Caki2 (cell line): ENCODE measurements at regions of chr2 and their contacts with region 1.

Region 1: GRCh38 chr2:201118121-201118960 is 2.4 kb downstream of the CFLAR start:
- DNase-seq: peak; percentile 96

Region 2: DNA sequence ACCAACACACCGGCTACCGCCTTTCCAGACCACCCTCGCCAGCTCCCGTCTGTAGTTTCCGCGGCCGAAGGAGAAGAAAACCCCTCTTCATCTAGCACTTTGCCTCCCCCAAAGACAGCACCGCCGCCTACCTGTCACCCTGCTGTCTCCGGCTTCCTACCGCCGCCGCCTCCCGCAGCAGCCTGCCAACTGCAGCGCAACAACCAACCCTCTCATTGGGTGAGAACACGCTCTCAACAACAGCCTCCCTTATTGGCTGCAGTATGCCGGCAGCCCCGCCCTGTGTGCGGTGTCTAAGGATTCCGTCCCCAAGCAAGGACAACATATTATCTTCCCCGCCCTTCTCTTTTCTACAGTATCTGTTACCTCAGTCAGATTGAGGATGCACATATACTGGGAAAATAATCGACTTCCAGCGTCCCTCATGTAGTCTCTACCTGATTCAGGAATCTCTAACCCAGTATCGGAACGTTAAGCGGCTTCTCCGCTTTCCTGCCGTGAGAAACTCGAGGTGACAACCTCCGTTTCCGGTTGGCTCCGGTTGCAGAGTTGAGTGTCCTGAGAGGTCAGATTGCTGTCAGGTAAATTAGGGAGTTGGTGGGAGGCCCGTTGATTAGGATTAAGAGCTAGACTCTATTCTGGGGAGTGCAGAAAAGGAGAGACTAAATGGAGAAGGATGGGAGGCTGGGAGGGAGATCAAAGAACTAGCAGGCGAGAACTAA is 46.7 kb before region 1 on chr2 and contains the starts of genes HYCC2 and NDUFB3:
- in situ Hi-C with region 1: no loop called
- DNase-seq: peak; percentile 97
- total RNA-seq, gene HYCC2: 0.70 and 2.8 TPM in 2 replicates
- total RNA-seq, gene NDUFB3: 210 and 256 TPM in 2 replicates

Region 3: DNA sequence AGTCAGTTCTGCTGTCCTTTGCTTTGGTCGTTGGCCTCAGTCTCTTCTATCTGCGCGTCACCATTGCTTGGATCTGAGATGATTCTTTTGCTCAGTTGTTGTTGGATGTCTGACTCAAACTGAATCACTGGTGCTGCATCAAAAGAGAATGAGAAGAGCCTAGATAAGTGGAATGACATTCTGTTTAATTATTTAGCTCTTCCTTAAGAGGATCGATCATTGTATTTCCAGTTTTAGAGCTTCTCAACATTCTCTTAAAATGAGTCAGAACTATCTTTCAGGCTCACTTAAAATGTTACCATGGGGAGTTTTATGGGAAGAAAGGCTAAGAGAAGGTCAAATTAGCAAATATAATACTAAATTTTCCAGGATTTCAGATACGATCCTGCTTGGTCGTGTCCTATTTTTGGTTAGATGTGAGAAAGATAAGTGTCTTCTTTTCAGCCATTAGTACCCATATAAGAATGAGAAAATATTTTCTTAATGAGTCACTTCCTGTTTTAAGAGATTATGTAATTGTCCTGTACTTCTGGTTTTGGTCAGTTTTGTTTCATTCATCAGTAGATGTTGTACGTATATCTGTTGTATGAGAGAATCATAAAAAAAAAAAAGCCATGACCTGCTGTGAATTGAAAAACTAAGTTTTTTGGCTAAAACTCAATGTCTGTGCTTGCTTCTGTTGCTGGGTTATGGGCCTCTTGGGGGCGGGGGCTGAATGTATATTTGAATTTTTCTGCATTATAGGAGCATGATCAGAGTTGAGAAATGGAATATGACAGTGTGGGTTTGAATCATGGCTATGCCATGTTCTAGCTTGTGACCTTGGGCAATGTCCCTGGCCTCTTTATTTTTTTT is 33.0 kb after region 1 on chr2:
- in situ Hi-C with region 1: loop called (anchors 5 kb)
- DNase-seq: peak; percentile 95

Region 4: GRCh38 chr2:201366146-201366545 is 247.8 kb after region 1 on chr2:
- in situ Hi-C with region 1: no loop called
- DNase-seq: no peak